ENCODE measurements at regions of chr6 and their contacts with region 1.

Region 1: GRCh38 chr6:119313937-119314884 is 35.4 kb downstream of the MAN1A1 start:
- DNase-seq: peak; percentile 61
- H3K4me3 Mint-ChIP-seq: peak overlapping the region; percentile 22
- H3K27ac Mint-ChIP-seq: peak overlapping the region; percentile 89
- H3K4me1 Mint-ChIP-seq: peaks cover 56% of the 10 kb centered on the region
- H3K27me3 Mint-ChIP-seq: no peaks in the 10 kb centered on the region

Region 2: GRCh38 chr6:118843685-118844390 is 470.4 kb before region 1 on chr6:
- CTCF ChIA-PET with region 1: no interaction called
- POLR2A ChIA-PET with region 1: no interaction called
- intact Hi-C with region 1: loop called (anchors 2 kb)
- DNase-seq: no peak
- H3K4me3 Mint-ChIP-seq: peak overlapping the region; percentile 33
- H3K27ac Mint-ChIP-seq: peak overlapping the region; percentile 34
- H3K4me1 Mint-ChIP-seq: peaks cover 32% of the 10 kb centered on the region
- H3K27me3 Mint-ChIP-seq: no peaks in the 10 kb centered on the region

Region 3: GRCh38 chr6:119209452-119210205 is 104.6 kb before region 1 on chr6:
- CTCF ChIA-PET with region 1: no interaction called
- POLR2A ChIA-PET with region 1: no interaction called
- intact Hi-C with region 1: no loop called
- DNase-seq: no peak
- H3K4me3 Mint-ChIP-seq: no peak overlapping the region
- H3K27ac Mint-ChIP-seq: no peak overlapping the region
- H3K4me1 Mint-ChIP-seq: peaks cover 3% of the 10 kb centered on the region
- H3K27me3 Mint-ChIP-seq: no peaks in the 10 kb centered on the region

Region 4: GRCh38 chr6:119259027-119259426 is 55.2 kb before region 1 on chr6:
- CTCF ChIA-PET with region 1: no interaction called
- POLR2A ChIA-PET with region 1: no interaction called
- intact Hi-C with region 1: loop called (anchors 5 kb)
- DNase-seq: no peak
- H3K4me3 Mint-ChIP-seq: no peak overlapping the region
- H3K27ac Mint-ChIP-seq: no peak overlapping the region
- H3K4me1 Mint-ChIP-seq: peaks cover 21% of the 10 kb centered on the region
- H3K27me3 Mint-ChIP-seq: no peaks in the 10 kb centered on the region

Region 5: DNA sequence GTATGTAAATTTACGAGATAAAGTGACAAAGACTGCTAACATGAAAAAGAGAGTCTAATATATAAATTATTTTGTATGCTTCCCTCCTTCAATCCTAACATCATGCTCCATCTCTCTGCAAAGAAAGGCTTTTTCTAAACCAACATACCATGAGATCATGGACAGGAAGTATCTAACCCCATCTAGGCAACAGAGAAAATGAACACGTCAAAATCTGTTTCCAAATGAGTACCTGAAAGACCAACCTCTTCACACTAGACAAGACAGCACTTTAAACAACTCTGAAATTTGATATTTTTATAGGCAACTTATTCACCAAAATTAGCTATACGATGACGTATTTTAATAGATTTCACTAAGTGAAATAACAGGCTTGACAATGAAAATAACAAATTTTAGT is 19.2 kb before region 1 on chr6:
- CTCF ChIA-PET with region 1: no interaction called
- POLR2A ChIA-PET with region 1: no interaction called
- intact Hi-C with region 1: loop called (anchors 1 kb)
- DNase-seq: no peak
- H3K4me3 Mint-ChIP-seq: no peak overlapping the region
- H3K27ac Mint-ChIP-seq: no peak overlapping the region
- H3K4me1 Mint-ChIP-seq: peaks cover 11% of the 10 kb centered on the region
- H3K27me3 Mint-ChIP-seq: no peaks in the 10 kb centered on the region